ENCODE measurements at regions of chr18 and their contacts with region 1.

Region 1: GRCh38 chr18:12934454-12935071 is 13.2 kb upstream of the SEH1L start:
- DNase-seq: peak; percentile 76 to 91
- ATAC-seq: peak; percentile 82 to 89 (median 86)
- H3K4me3 ChIP-seq: no peak overlapping the region
- H3K4me3 Mint-ChIP-seq: peak overlapping the region; percentile 7
- H3K27ac ChIP-seq: no peak overlapping the region
- H3K27ac Mint-ChIP-seq: peak overlapping the region in 1 of 2 donors; percentile 7
- H3K4me1 ChIP-seq: peaks cover 16% of the 10 kb centered on the region
- H3K4me1 Mint-ChIP-seq: peaks cover 19 to 27% of the 10 kb centered on the region in 2 donors
- H3K27me3 ChIP-seq: no peaks in the 10 kb centered on the region
- H3K27me3 Mint-ChIP-seq: peaks cover 38 to 47% of the 10 kb centered on the region in 2 donors
- CTCF ChIP-seq: peak; percentile 97

Region 2: GRCh38 chr18:12231040-12231882 is 703.3 kb before region 1 on chr18:
- intact Hi-C with region 1: no loop called
- DNase-seq: no peak
- ATAC-seq: no peak
- H3K4me3 ChIP-seq: no peak overlapping the region
- H3K4me3 Mint-ChIP-seq: no peak overlapping the region
- H3K27ac ChIP-seq: no peak overlapping the region
- H3K27ac Mint-ChIP-seq: no peak overlapping the region
- H3K4me1 ChIP-seq: no peaks in the 10 kb centered on the region
- H3K4me1 Mint-ChIP-seq: no peaks in the 10 kb centered on the region
- H3K27me3 ChIP-seq: no peaks in the 10 kb centered on the region
- H3K27me3 Mint-ChIP-seq: peaks cover 7% of the 10 kb centered on the region in 2 donors
- CTCF ChIP-seq: no peak

Region 3: GRCh38 chr18:12391618-12392165 is 542.9 kb before region 1 on chr18:
- intact Hi-C with region 1: loop called (anchors 5 kb)
- DNase-seq: peak; percentile 29 to 78
- ATAC-seq: peak; percentile 79 to 96 (median 89)
- H3K4me3 ChIP-seq: no peak overlapping the region
- H3K4me3 Mint-ChIP-seq: no peak overlapping the region
- H3K27ac ChIP-seq: no peak overlapping the region
- H3K27ac Mint-ChIP-seq: no peak overlapping the region
- H3K4me1 ChIP-seq: no peaks in the 10 kb centered on the region
- H3K4me1 Mint-ChIP-seq: no peaks in the 10 kb centered on the region
- H3K27me3 ChIP-seq: peaks cover 2% of the 10 kb centered on the region
- H3K27me3 Mint-ChIP-seq: peaks cover 7 to 10% of the 10 kb centered on the region in 2 donors
- CTCF ChIP-seq: peak; percentile 71

Region 4: GRCh38 chr18:12726774-12727550 is 207.6 kb before region 1 on chr18:
- intact Hi-C with region 1: loop called (anchors 1 kb)
- DNase-seq: peak; percentile 33 to 84
- ATAC-seq: peak; percentile 69 to 82 (median 78)
- H3K4me3 ChIP-seq: no peak overlapping the region
- H3K4me3 Mint-ChIP-seq: no peak overlapping the region
- H3K27ac ChIP-seq: no peak overlapping the region
- H3K27ac Mint-ChIP-seq: peak overlapping the region in 1 of 2 donors; percentile 7
- H3K4me1 ChIP-seq: no peaks in the 10 kb centered on the region
- H3K4me1 Mint-ChIP-seq: peaks cover 4 to 5% of the 10 kb centered on the region in 2 donors
- H3K27me3 ChIP-seq: no peaks in the 10 kb centered on the region
- H3K27me3 Mint-ChIP-seq: no peaks in the 10 kb centered on the region
- CTCF ChIP-seq: peak; percentile 91

Region 5: GRCh38 chr18:12744103-12744502 is 190.5 kb before region 1 on chr18:
- intact Hi-C with region 1: loop called (anchors 1 kb)
- DNase-seq: peak in 1 of 2 donors; percentile 68
- ATAC-seq: peak; percentile 56 to 88 (median 73)
- H3K4me3 ChIP-seq: no peak overlapping the region
- H3K4me3 Mint-ChIP-seq: no peak overlapping the region
- H3K27ac ChIP-seq: no peak overlapping the region
- H3K27ac Mint-ChIP-seq: no peak overlapping the region
- H3K4me1 ChIP-seq: no peaks in the 10 kb centered on the region
- H3K4me1 Mint-ChIP-seq: peaks cover 0 to 1% of the 10 kb centered on the region in 2 donors
- H3K27me3 ChIP-seq: no peaks in the 10 kb centered on the region
- H3K27me3 Mint-ChIP-seq: peaks cover 0 to under 1% of the 10 kb centered on the region in 2 donors
- CTCF ChIP-seq: peak; percentile 67

Region 6: DNA sequence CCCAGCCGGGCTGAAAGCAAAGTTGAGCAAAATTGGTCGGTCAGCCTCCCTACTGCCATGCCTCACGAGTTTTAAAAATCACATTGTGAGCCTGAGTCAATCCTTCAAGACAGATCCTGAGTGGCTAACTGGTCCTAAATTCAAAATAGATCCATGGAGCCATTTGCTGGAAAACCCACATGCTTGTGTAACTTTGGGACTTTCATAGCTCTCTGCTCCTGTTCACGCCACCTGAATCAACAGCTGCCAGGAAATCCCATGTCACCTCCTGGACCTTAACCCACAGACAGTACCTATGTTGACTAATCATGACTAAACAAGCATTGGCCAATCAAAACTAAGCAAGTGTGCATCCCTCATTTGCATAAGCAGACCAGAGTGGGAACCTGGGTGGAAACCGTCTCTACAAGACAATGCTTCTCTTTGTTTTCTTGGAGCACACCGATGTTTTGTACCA is 241.2 kb after region 1 on chr18:
- intact Hi-C with region 1: no loop called
- DNase-seq: no peak
- ATAC-seq: no peak
- H3K4me3 ChIP-seq: no peak overlapping the region
- H3K4me3 Mint-ChIP-seq: no peak overlapping the region
- H3K27ac ChIP-seq: no peak overlapping the region
- H3K27ac Mint-ChIP-seq: no peak overlapping the region
- H3K4me1 ChIP-seq: no peaks in the 10 kb centered on the region
- H3K4me1 Mint-ChIP-seq: no peaks in the 10 kb centered on the region
- H3K27me3 ChIP-seq: no peaks in the 10 kb centered on the region
- H3K27me3 Mint-ChIP-seq: peaks cover 5 to 10% of the 10 kb centered on the region in 2 donors
- CTCF ChIP-seq: no peak

Measured in natural killer cell (primary cell).